Activated CD4-positive, alpha-beta memory T cell treated with anti-CD3 and anti-CD28 coated beads for 36 hours (primary cell): ENCODE measurements at regions of chr9 and their contacts with region 1.

Region 1: GRCh38 chr9:96654443-96655197 is 497 bp downstream of the PRXL2C start:
- DNase-seq: peak; percentile 77
- H3K4me3 Mint-ChIP-seq: peak overlapping the region; percentile 85
- H3K27ac Mint-ChIP-seq: peak overlapping the region; percentile 70
- H3K4me1 Mint-ChIP-seq: peaks cover 13% of the 10 kb centered on the region
- H3K27me3 Mint-ChIP-seq: no peaks in the 10 kb centered on the region

Region 2: DNA sequence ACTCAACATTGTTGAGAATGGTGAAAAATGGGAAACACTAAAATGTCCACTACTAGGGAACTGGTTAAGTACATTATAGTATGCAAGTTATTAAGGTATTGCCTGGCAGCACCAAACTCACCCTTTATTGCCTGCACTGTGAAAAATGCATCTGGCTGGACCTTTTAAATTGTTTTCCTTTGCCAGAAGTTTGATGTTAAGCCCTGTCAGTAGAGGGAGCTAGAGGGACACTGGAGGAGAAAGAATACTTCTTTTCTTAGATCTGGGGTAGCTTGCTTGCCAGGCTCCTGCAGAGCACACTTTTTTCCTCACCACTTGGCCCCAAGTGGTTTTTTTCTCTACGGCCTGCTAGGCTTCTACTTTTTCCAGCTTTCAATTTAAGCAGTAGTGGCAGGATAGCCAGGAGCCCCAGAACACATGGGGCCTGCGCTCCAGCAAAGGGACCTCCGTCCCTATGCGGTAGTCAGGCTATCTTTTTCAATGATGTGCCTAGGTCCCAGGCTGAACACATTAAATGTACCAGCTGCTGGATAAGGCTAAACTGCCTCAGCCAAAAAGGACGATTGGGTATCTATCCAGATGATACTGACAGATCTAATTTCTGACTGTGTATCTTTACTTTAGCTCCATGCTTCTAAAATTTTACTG is 212.7 kb before region 1 on chr9:
- CTCF ChIA-PET with region 1: interaction called, 11 read pairs
- POLR2A ChIA-PET with region 1: interaction called, 3 read pairs
- intact Hi-C with region 1: loop called (anchors 1 kb)
- DNase-seq: no peak
- H3K4me3 Mint-ChIP-seq: no peak overlapping the region
- H3K27ac Mint-ChIP-seq: no peak overlapping the region
- H3K4me1 Mint-ChIP-seq: no peaks in the 10 kb centered on the region
- H3K27me3 Mint-ChIP-seq: no peaks in the 10 kb centered on the region

Region 3: DNA sequence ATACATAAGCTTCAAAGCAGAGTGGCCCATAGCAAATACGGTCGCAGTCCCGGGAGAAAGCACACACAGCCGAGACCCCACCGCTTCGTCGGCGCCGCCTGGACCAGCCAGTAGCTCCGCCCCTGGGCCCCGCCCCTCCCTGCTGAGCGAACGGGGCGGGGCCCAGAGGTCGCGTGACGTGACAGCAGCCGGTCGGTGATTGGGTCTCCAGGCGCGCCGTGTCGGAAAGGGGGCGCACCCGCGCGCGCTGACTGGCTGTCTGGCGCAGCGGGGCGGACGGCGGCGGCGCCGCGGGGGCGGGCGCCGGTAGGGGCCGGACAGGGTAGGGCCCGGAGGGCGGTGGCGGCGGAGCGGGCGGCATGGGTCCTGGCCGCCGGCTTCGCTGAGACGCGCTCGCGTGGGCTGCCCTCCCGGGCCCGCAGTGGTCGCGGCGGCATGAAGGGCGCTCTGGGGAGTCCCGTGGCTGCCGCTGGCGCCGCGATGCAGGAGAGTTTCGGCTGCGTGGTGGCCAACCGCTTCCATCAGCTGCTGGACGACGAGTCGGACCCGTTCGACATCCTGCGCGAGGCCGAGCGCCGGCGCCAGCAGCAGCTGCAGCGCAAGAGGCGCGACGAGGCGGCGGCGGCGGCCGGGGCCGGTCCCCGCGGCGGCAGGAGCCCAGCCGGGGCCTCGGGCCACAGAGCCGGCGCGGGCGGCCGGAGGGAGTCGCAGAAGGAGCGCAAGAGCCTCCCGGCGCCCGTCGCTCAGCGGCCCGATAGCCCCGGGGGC is 204.6 kb before region 1 on chr9 and contains the start of gene HABP4:
- CTCF ChIA-PET with region 1: interaction called, 4 read pairs
- POLR2A ChIA-PET with region 1: interaction called, 11 read pairs
- intact Hi-C with region 1: no loop called
- DNase-seq: peak; percentile 97
- H3K4me3 Mint-ChIP-seq: peak within 1 kb of the TSS; percentile 89
- H3K27ac Mint-ChIP-seq: peak within 1 kb of the TSS; percentile 75
- H3K4me1 Mint-ChIP-seq: peaks cover 33% of the 10 kb centered on the region
- H3K27me3 Mint-ChIP-seq: peaks cover 8% of the 10 kb centered on the region
- total RNA-seq, gene HABP4: 17.4 to 19.0 TPM

Region 4: DNA sequence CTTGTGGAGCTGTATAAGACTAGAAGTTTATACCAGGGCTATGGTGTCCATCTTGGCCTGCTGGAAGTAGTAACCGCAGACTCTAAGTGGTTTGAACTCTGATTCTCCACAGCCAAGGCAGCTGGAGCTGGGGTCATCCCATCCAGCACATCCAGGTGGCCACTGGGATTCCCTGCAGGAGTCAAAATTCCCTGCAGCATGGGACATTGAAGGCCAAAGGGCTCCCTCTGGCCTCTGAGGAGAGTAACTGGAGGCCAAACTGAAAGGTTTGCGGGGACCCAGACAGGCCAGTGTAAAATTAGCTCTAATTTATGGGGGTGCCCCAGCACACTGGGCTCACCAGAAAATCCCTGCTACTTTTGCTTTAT is 12.7 kb after region 1 on chr9:
- CTCF ChIA-PET with region 1: interaction called, 10 read pairs
- POLR2A ChIA-PET with region 1: no interaction called
- intact Hi-C with region 1: no loop called
- DNase-seq: no peak
- H3K4me3 Mint-ChIP-seq: no peak overlapping the region
- H3K27ac Mint-ChIP-seq: no peak overlapping the region
- H3K4me1 Mint-ChIP-seq: no peaks in the 10 kb centered on the region
- H3K27me3 Mint-ChIP-seq: peaks cover 6% of the 10 kb centered on the region

Region 5: GRCh38 chr9:96686548-96687335 is 32.1 kb after region 1 on chr9:
- CTCF ChIA-PET with region 1: no interaction called
- POLR2A ChIA-PET with region 1: no interaction called
- intact Hi-C with region 1: loop called (anchors 2 kb)
- DNase-seq: peak; percentile 88
- H3K4me3 Mint-ChIP-seq: peak overlapping the region; percentile 68
- H3K27ac Mint-ChIP-seq: peak overlapping the region; percentile 42
- H3K4me1 Mint-ChIP-seq: peaks cover 3% of the 10 kb centered on the region
- H3K27me3 Mint-ChIP-seq: peaks cover 5% of the 10 kb centered on the region